IMR-90 (cell line): ENCODE measurements at regions of chr2 and their contacts with region 1.

Region 1: GRCh38 chr2:85772019-85772745 is 18.4 kb downstream of the ATOH8 start:
- DNase-seq: peak; percentile 100
- ATAC-seq: peak; percentile 90
- H3K4me3 ChIP-seq: no peak overlapping the region
- H3K27ac ChIP-seq: peak overlapping the region; percentile 88
- H3K4me1 ChIP-seq: peaks cover 46% of the 10 kb centered on the region
- H3K27me3 ChIP-seq: no peaks in the 10 kb centered on the region
- CTCF ChIP-seq: peak; percentile 41; the same call in 1 of the 2 replicates
- POLR2A ChIP-seq: peak; percentile 46
- RAD21 ChIP-seq: peak; percentile 52

Region 2: DNA sequence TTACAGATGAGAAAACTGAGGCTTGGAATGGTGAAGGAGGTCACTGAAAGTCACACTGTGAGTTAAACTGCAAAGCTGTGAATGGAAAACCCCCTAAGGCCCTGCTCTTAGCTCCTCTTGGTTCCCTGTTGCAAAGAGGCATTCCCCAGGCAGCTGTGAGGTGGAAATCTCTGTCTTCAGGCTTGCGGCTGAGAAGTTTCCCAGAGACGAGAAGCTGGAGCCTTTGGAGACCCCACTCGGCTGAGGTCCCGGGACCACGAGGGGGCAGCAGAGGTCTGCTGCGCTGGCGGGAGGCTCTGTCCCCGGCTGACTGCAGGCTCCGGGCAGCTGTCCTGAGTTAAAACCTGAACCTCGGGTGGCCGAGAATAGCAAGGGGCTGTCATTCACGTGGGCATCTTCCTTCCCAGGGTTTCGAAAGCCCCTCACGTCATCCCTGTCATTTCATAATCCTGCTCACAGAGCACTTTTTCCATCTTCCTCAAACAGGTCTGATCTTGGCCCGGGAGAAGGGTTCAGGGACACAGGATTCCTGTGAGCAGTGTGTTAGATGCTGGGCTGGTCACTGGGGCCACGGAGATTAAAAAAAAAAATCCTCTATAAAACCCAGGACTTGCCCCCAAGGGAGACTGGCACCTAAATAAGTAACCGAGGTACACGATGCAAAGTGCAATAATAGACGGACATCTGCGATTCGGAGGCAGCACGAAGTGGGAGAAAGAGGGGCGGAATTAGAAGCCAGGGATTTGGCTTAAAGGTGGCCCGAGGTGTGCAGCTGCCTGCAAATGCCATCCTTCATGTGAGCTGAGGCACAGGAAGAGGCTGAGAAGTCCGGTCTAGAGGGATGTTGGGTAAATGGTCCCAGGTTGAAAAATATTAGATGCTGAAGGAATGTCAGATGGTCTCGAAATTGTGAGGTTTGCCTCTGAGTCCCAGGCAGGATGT is 43.0 kb before region 1 on chr2:
- CTCF ChIA-PET with region 1: interaction called, 6 read pairs
- POLR2A ChIA-PET with region 1: no interaction called
- dilution Hi-C with region 1: no loop called
- in situ Hi-C with region 1: no loop called
- intact Hi-C with region 1: loop called (anchors 1 kb)
- DNase-seq: peak; percentile 72
- ATAC-seq: peak; percentile 98
- H3K4me3 ChIP-seq: no peak overlapping the region
- H3K27ac ChIP-seq: no peak overlapping the region
- H3K4me1 ChIP-seq: peaks cover 5% of the 10 kb centered on the region
- H3K27me3 ChIP-seq: no peaks in the 10 kb centered on the region
- CTCF ChIP-seq: peak; percentile 99
- POLR2A ChIP-seq: peak; percentile 43; the same call in 1 of the 2 replicates
- RAD21 ChIP-seq: peak; percentile 100

Region 3: GRCh38 chr2:85741833-85742455 is 30.2 kb before region 1 on chr2:
- CTCF ChIA-PET with region 1: interaction called, 4 read pairs
- POLR2A ChIA-PET with region 1: no interaction called
- dilution Hi-C with region 1: no loop called
- in situ Hi-C with region 1: no loop called
- intact Hi-C with region 1: loop called (anchors 1 kb)
- DNase-seq: peak; percentile 96
- ATAC-seq: peak; percentile 78
- H3K4me3 ChIP-seq: no peak overlapping the region
- H3K27ac ChIP-seq: peak overlapping the region; percentile 90
- H3K4me1 ChIP-seq: peaks cover 46% of the 10 kb centered on the region
- H3K27me3 ChIP-seq: no peaks in the 10 kb centered on the region
- CTCF ChIP-seq: no peak
- POLR2A ChIP-seq: no peak; the same call in 1 of the 2 replicates
- RAD21 ChIP-seq: no peak

Region 4: GRCh38 chr2:85750587-85751575 is 21.3 kb before region 1 on chr2:
- CTCF ChIA-PET with region 1: interaction called, 5 read pairs
- POLR2A ChIA-PET with region 1: interaction called, 4 read pairs
- dilution Hi-C with region 1: no loop called
- in situ Hi-C with region 1: no loop called
- intact Hi-C with region 1: loop called (anchors 1 kb)
- DNase-seq: peak; percentile 58
- ATAC-seq: peak; percentile 51
- H3K4me3 ChIP-seq: no peak overlapping the region
- H3K27ac ChIP-seq: no peak overlapping the region
- H3K4me1 ChIP-seq: peaks cover 14% of the 10 kb centered on the region
- H3K27me3 ChIP-seq: no peaks in the 10 kb centered on the region; the same call in 1 of the 2 replicates
- CTCF ChIP-seq: peak; percentile 81
- POLR2A ChIP-seq: no peak
- RAD21 ChIP-seq: peak; percentile 84

Region 5: DNA sequence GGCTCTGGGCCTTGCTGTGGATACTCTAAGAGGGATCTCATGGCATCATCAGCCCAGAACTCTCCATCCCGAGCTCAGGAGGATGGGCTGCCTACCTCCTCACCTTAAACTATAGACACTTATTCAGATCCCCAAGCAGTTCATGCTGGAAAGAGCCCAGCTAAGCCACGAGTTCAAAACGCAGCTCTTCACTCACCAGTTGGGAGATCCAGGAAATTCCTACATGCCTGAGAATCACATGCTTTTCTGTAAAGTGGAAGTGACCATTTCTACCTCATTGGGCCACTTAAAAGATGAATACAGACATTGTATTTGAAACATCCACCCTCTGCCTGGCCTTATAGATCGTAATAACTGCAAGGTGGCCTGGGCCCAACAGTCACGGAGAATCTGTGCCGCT is 11.8 kb before region 1 on chr2:
- CTCF ChIA-PET with region 1: interaction called, 20 read pairs
- POLR2A ChIA-PET with region 1: interaction called, 3 read pairs
- dilution Hi-C with region 1: no loop called
- in situ Hi-C with region 1: no loop called
- intact Hi-C with region 1: loop called (anchors 1 kb)
- DNase-seq: peak; percentile 70
- ATAC-seq: peak; percentile 9
- H3K4me3 ChIP-seq: no peak overlapping the region
- H3K27ac ChIP-seq: no peak overlapping the region
- H3K4me1 ChIP-seq: peaks cover 25% of the 10 kb centered on the region
- H3K27me3 ChIP-seq: no peaks in the 10 kb centered on the region
- CTCF ChIP-seq: no peak
- POLR2A ChIP-seq: no peak
- RAD21 ChIP-seq: no peak

Region 6: DNA sequence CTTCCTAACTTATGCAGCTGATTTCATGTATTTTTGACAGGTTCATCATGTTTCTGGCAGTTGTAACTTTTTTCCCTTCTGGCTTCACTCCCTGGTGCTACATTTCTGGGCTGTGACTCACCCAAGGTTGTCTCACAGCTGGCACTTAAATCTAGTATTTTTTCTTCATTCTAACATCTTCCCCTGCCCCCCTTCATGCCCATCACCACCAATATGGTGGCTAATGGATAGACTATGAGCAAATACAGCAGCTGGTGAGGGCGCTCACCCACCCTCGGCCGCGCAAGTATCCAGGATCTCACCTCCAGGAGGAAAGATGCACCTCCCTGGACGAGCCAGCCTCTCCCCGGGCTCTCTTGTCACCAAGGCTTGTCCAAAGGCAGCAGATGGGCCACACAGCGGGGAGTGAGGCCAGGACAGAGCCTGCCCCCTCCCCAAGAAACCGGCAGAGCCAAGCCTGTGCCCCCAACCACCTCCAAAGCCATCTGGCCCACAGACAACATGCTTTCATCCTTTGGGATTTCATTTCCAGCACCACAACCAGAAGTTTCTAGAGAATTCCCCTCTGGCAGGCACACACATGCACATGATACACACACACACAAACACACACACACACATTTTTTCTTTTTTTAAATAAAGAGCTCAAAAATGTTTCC is 20.7 kb after region 1 on chr2:
- CTCF ChIA-PET with region 1: interaction called, 3 read pairs
- POLR2A ChIA-PET with region 1: interaction called, 3 read pairs
- dilution Hi-C with region 1: no loop called
- in situ Hi-C with region 1: no loop called
- intact Hi-C with region 1: loop called (anchors 2 kb)
- DNase-seq: peak; percentile 85
- ATAC-seq: peak; percentile 35
- H3K4me3 ChIP-seq: no peak overlapping the region
- H3K27ac ChIP-seq: peak overlapping the region; percentile 7; the same call in 1 of the 2 replicates
- H3K4me1 ChIP-seq: peaks cover 42% of the 10 kb centered on the region
- H3K27me3 ChIP-seq: no peaks in the 10 kb centered on the region
- CTCF ChIP-seq: no peak
- POLR2A ChIP-seq: no peak
- RAD21 ChIP-seq: no peak

Region 7: GRCh38 chr2:86249579-86250391 is 477.6 kb after region 1 on chr2:
- CTCF ChIA-PET with region 1: no interaction called
- POLR2A ChIA-PET with region 1: no interaction called
- dilution Hi-C with region 1: no loop called
- in situ Hi-C with region 1: no loop called
- intact Hi-C with region 1: no loop called
- DNase-seq: peak; percentile 79
- ATAC-seq: no peak
- H3K4me3 ChIP-seq: no peak overlapping the region
- H3K27ac ChIP-seq: no peak overlapping the region
- H3K4me1 ChIP-seq: no peaks in the 10 kb centered on the region
- H3K27me3 ChIP-seq: peaks cover 26% of the 10 kb centered on the region
- CTCF ChIP-seq: no peak
- POLR2A ChIP-seq: no peak
- RAD21 ChIP-seq: no peak